ENCODE measurements at regions of chr4 and their contacts with region 1.

Region 1: GRCh38 chr4:75724066-75724866 is at the start of gene USO1:
- DNase-seq: peak; percentile 100
- H3K4me3 Mint-ChIP-seq: peak within 1 kb of the TSS; percentile 98
- H3K27ac Mint-ChIP-seq: peak within 1 kb of the TSS; percentile 99
- H3K4me1 Mint-ChIP-seq: peaks cover 39% of the 10 kb centered on the region
- H3K27me3 Mint-ChIP-seq: no peaks in the 10 kb centered on the region
- total RNA-seq, gene USO1: 57.4 and 59.0 TPM in 2 replicates

Region 2: DNA sequence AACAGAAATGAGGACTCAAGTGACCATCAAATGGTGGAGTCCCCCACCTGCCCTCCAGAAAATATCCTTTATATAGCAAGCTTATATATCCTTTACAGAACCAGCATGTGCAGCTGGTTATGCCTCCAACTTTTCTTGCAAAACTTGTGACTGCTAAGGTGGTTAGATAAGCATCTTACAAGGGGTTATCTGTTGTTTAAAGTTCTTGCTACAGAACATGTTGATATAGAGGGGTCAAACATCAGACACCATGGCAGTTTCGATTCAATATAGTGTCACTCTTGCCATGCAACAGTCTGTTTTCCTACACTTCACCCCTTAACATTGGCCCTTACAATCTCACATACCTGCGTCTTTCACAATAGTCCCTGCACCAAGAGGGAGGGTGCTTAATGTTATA is 269.8 kb before region 1 on chr4:
- intact Hi-C with region 1: no loop called
- DNase-seq: no peak
- H3K4me3 Mint-ChIP-seq: no peak overlapping the region
- H3K27ac Mint-ChIP-seq: no peak overlapping the region
- H3K4me1 Mint-ChIP-seq: no peaks in the 10 kb centered on the region
- H3K27me3 Mint-ChIP-seq: no peaks in the 10 kb centered on the region

Region 3: DNA sequence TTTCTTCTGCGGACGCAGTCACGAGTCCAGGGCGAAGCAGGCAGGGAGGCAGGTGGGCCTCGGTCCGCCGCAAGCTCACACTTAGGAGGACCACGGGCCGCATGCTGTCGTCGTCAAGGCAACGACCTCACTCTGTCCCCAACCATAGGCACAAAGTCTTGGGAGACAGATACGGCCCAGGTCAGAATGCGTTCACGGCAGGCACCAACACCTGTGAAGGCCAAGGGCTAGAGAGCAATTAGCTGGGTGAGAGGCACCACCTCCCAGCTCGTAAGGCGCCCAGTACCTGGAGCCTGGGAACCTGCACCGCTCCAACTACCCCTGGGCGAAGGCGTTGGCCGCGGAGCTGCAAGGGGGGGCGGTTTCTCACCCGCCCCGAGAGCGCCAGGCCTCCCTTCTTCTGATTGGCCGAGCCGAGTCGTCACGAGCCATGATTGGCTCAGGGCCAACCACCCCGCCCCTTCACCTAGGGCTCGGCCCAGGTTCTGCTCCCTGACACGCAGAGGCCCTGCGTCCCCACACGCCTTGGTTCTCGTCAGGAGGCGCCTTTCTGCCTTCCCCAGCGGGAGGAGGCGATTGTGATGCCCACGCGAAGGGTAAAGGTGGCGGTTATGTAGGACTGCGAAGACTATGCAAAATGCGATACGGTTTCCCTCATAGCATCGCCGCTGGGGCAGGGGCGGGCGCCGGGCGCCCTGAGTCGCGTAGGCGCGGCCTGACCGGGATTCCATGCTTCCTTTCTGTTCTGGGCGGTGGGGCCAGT is 93.9 kb before region 1 on chr4 and contains the start of gene CDKL2:
- intact Hi-C with region 1: loop called (anchors 1 kb)
- DNase-seq: peak; percentile 87
- H3K4me3 Mint-ChIP-seq: peak within 1 kb of the TSS; percentile 82
- H3K27ac Mint-ChIP-seq: peak within 1 kb of the TSS; percentile 56
- H3K4me1 Mint-ChIP-seq: peaks cover 12% of the 10 kb centered on the region
- H3K27me3 Mint-ChIP-seq: peaks cover 6% of the 10 kb centered on the region
- total RNA-seq, gene CDKL2: 0.23 and 0.57 TPM in 2 replicates

Region 4: GRCh38 chr4:75673027-75673958 is 51.0 kb before region 1 on chr4 and contains the start of gene G3BP2:
- intact Hi-C with region 1: loop called (anchors 1 kb)
- DNase-seq: peak; percentile 97
- H3K4me3 Mint-ChIP-seq: peak within 1 kb of the TSS; percentile 99
- H3K27ac Mint-ChIP-seq: peak within 1 kb of the TSS; percentile 99
- H3K4me1 Mint-ChIP-seq: peaks cover 40% of the 10 kb centered on the region
- H3K27me3 Mint-ChIP-seq: no peaks in the 10 kb centered on the region
- total RNA-seq, gene G3BP2: 143 and 156 TPM in 2 replicates

Region 5: GRCh38 chr4:75686346-75686745 is 37.9 kb before region 1 on chr4:
- intact Hi-C with region 1: no loop called
- DNase-seq: no peak
- H3K4me3 Mint-ChIP-seq: no peak overlapping the region
- H3K27ac Mint-ChIP-seq: no peak overlapping the region
- H3K4me1 Mint-ChIP-seq: peaks cover 31% of the 10 kb centered on the region
- H3K27me3 Mint-ChIP-seq: no peaks in the 10 kb centered on the region

Region 6: DNA sequence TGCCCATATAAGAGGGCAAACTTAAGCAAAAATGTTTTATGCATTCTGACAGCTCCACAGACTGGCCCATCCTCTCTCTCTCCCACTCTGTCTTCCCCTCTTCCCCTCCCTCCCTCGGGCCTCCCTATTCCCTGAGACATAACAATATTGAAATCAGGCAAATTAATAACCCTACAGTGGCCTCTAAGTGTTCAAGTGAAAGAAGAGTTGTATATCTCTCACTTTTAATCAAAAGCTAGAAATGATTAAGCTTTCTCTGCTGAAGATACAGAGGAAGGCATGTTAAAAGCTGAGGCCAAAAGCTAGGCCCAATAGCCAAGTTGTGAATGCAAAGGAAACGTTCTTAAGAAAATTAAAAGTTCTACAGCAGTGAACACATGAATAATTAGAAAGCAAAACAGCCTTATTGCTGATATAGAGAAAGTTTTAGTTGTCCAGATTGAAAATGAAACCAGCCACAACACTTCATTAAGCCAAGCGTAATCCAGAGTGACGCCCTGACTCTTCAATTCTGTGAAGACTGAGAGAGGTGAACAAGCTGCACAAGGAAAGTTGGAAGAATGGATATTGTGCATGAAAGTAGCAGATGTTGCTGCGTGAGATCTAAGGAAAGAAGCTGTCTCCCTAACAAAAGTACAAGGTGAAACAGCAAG is 55.0 kb after region 1 on chr4:
- intact Hi-C with region 1: no loop called
- DNase-seq: no peak
- H3K4me3 Mint-ChIP-seq: no peak overlapping the region
- H3K27ac Mint-ChIP-seq: no peak overlapping the region
- H3K4me1 Mint-ChIP-seq: peaks cover 3% of the 10 kb centered on the region
- H3K27me3 Mint-ChIP-seq: no peaks in the 10 kb centered on the region

Region 7: DNA sequence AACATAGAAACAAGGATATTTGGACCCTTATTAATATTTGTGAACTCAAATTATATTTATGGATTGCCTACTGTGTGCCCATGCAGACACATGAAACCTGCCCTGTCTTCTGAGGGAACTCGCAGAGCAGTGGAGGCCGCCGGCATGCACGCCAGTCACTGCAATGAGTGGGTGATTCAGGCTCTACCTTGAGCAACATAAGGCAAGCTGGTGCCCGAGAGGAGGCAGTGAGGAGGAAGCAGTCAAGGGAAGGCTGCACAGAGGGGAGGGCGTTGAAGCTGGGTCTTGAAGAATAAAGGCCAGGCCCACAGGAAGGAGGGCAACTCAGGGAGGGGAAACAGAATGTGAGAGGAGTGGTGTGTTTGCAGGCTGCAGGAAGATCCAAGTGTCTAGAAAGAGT is 125.2 kb after region 1 on chr4:
- intact Hi-C with region 1: loop called (anchors 2 kb)
- DNase-seq: no peak
- H3K4me3 Mint-ChIP-seq: no peak overlapping the region
- H3K27ac Mint-ChIP-seq: no peak overlapping the region
- H3K4me1 Mint-ChIP-seq: peaks cover 10% of the 10 kb centered on the region
- H3K27me3 Mint-ChIP-seq: peaks cover 4% of the 10 kb centered on the region

Region 8: DNA sequence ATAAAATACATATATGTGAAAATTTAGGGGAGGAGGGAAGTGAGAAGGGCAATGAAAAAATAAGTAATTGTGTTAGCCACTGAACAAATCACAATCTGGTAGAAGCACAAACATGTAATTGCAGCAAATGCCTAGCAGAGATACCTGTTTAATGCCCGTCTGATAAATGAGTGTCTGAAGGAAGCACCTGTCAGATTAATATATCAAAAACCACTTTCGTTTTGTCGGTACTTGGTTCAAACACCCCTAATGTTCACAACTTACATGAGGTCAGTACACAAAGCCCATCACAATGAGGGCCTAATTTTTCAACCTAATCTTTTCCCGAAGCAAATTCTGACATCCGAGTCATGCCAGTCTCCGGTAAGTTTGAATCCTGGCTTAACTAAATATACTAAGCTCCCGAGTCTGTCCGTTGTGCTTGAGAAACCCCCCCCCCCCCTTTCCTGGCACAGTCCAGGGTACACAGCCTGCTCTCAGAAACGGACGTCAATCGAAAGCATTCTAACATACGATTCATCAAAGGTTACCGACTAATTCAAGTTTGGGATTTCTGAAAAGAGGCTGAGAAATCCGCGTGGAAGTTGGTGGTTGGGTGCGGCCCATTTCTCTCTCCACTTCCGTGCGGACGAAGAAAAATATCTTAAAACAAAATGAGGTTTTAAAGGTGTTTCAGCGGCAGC is 265.7 kb after region 1 on chr4:
- intact Hi-C with region 1: loop called (anchors 1 kb)
- DNase-seq: no peak
- H3K4me3 Mint-ChIP-seq: peak overlapping the region; percentile 87
- H3K27ac Mint-ChIP-seq: peak overlapping the region; percentile 62
- H3K4me1 Mint-ChIP-seq: peaks cover 25% of the 10 kb centered on the region
- H3K27me3 Mint-ChIP-seq: no peaks in the 10 kb centered on the region

Region 9: GRCh38 chr4:76055016-76055415 is 330.8 kb after region 1 on chr4:
- intact Hi-C with region 1: no loop called
- DNase-seq: no peak
- H3K4me3 Mint-ChIP-seq: no peak overlapping the region
- H3K27ac Mint-ChIP-seq: no peak overlapping the region
- H3K4me1 Mint-ChIP-seq: peaks cover 40% of the 10 kb centered on the region
- H3K27me3 Mint-ChIP-seq: no peaks in the 10 kb centered on the region